ENCODE measurements at regions of chr3 and their contacts with region 1.

Region 1: DNA sequence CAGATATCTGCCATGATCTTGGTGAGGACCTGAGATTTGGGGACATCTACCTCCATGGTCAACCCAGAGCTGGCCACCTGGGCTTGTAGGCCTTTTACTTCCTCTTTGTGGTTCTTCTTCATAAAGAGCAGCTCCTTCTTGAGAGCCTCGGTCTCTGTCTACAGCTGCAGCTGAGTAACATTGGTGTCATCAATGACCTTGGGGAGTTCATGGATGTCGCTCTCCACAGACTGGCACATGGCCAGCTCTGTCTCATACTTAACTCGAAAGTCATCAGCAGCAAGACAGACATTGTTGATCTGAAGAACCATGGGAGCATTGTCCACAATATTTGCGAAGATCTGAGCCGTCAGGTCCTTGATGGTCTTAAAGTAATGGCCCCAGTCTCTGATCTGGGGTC is 15.7 kb upstream of the RASA2 start:
- DNase-seq: no peak
- H3K4me3 ChIP-seq: no peak overlapping the region
- H3K27ac ChIP-seq: no peak overlapping the region
- H3K4me1 ChIP-seq: no peaks in the 10 kb centered on the region
- H3K27me3 ChIP-seq: no peaks in the 10 kb centered on the region
- CTCF ChIP-seq: no peak
- POLR2A ChIP-seq: no peak

Region 2: DNA sequence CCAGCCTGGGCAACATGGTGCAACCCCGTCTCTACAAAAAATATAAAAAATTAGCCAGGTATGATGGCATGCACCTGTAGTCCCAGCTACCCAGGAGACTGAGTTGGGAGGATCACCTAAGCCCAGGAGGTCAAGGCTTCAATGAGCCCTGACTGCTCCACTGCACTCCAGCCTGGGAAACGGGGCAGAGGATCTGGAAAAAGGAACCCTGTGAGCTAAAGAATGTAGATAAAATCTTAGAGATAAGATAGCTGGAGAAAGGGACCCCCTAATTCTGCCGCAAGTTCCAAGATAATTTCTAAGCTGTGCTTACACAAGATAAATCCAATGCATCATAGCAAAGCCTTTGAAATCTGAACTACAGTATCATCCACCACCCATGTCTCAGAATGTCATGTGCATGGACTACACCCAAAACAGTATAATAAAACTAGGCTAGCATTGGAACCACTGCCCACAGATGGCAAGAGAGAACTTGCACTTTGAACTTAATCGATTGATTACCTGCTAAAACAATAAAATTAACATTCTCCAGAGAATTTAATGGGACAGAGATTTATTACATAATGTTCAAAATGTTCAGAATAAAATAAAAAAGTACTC is 693.4 kb before region 1 on chr3:
- intact Hi-C with region 1: no loop called
- DNase-seq: no peak
- H3K4me3 ChIP-seq: no peak overlapping the region
- H3K27ac ChIP-seq: no peak overlapping the region
- H3K4me1 ChIP-seq: no peaks in the 10 kb centered on the region
- H3K27me3 ChIP-seq: no peaks in the 10 kb centered on the region
- CTCF ChIP-seq: no peak
- POLR2A ChIP-seq: no peak

Region 3: GRCh38 chr3:141561426-141562034 is 90.4 kb after region 1 on chr3:
- intact Hi-C with region 1: loop called (anchors 5 kb)
- DNase-seq: no peak
- H3K4me3 ChIP-seq: no peak overlapping the region
- H3K27ac ChIP-seq: no peak overlapping the region
- H3K4me1 ChIP-seq: peaks cover 23% of the 10 kb centered on the region
- H3K27me3 ChIP-seq: no peaks in the 10 kb centered on the region
- CTCF ChIP-seq: peak; percentile 91 to 99 (median 92)
- POLR2A ChIP-seq: no peak

Region 4: DNA sequence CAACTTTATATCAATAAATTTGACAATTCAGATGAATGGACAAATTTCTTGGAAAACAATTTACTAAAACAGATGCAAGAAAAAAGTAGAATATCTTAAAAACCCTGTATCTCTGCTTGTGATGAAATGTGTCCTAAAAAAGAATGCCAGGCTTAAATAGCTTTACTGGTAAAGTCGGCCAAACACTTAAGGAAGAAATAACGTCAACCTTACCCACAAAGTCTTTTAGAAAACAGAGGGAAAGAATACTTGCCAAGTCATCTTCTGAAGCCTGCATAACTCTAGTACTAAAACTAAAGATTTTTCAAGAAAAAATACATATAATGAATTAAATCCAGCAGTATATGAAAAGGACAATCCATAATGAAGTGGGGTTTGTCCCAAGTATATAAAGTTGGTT is 126.8 kb after region 1 on chr3:
- intact Hi-C with region 1: no loop called
- DNase-seq: no peak
- H3K4me3 ChIP-seq: no peak overlapping the region
- H3K27ac ChIP-seq: no peak overlapping the region
- H3K4me1 ChIP-seq: no peaks in the 10 kb centered on the region
- H3K27me3 ChIP-seq: no peaks in the 10 kb centered on the region
- CTCF ChIP-seq: no peak
- POLR2A ChIP-seq: no peak

Measured in vagina (tissue), 2 donors.